Left colon (tissue), 2 donors: ENCODE measurements at regions of chr10 and their contacts with region 1.

Region 1: GRCh38 chr10:31490858-31491504 is 172.0 kb downstream of the ZEB1 start:
- DNase-seq: no peak
- ATAC-seq: peak; percentile 40

Region 2: DNA sequence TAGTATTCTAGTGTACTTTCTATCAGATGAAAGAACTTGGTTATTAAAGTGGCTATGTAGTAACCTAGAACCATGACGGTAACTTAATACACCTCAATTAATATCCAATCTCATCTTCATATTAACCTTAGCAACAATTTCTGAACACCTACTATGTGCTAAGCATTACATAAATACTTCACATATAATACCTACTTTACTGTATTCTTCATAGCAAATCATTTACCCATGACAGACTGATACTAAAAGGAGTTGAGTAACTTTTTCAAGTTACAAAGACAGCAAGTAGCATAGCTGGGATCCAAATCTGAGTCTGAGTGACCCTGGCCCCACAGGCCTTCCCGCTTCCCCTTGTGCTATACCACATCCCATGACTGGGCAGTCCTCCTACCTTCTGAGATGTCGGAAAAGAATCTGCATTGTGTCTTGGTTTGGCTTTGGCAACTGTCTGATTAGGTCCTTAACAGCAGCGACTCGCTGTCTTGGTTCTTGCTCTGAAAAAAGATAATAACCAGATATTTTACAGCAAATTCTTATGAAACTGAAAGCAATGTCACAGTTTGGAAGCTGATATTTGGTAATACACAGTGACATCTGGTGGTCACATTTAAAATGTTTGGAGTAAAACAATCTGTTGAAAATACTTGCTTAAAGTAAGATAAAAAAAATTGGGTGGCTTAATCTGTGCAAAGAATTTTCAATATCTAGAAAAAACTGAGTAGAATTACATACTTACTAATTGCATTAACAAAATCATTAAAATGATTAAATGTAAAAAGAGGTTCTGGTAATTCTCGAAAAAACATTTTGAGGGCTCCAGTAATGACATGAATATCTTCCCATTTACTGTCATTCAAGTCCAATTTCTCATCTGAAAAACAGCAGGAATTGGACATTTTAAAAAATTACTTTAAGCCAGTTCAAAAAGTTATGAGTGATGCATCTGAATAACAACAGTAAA is 317.6 kb after region 1 on chr10:
- intact Hi-C with region 1: loop called in 1 of 2 experiments (anchors 10 kb)
- DNase-seq: no peak
- ATAC-seq: peak; percentile 53

Region 3: DNA sequence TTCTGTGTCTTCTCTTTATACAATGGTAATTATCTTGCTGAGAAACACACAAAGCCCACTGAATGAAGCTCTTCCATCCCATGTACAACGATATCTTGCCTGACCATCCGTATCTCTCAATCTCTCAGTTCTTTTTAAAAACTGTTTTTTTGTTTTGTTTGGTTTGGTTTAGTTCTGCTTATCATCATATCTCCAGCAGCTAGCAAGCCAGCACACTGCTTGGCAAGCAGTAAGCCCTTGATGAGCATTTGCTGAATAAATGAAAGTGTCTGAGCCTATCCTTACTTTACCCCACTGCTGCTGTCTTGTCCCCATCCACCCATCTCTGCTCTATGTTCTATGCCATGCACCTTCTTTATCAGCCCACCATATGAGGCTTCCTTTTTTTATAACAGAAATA is 1432.9 kb after region 1 on chr10:
- intact Hi-C with region 1: no loop called
- DNase-seq: no peak
- ATAC-seq: no peak

Region 4: GRCh38 chr10:33015761-33016547 is 1525.0 kb after region 1 on chr10:
- intact Hi-C with region 1: no loop called
- DNase-seq: no peak
- ATAC-seq: no peak